Calu3 (cell line): ENCODE measurements at regions of chr2 and their contacts with region 1.

Region 1: DNA sequence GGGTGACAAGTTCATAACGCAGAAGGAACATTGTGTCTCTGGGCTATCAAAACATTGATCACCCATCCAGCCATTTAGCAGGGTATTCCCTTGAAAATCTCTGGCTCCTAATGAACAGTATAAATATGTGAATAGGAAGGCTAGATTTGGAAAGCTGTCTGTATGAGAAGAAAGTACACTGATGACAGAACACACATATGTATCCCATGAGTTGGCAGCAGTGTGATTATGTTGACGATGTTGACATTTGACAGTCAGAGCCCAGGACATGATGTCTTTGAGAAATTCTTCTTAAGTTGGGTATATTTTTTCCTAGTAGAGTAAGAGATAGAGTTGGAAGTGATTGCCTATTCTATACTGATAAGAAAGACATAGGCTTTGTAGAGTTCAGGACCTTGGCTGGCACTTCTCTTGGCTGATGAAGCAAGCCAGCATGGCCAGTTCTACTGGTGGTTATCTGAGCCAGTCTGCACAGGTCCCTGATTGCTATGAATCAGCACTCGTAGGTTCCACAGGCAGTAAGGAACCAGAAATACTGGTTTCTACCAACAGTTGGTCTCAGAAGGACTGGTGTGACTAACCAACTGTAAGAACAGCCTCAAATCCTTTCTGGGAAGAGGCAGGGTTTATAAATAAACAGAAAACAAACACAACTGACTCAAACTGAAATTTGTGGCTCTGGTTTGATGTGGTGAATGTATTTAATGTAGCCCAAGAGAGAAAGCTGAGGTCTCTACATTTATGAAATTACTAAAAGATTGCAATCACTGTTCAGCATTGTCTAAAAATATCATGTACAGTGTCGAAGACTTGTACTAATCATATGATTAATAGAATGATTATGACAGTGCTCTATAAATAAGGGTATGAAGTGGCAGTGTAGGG is 43.9 kb upstream of the RAPH1 start:
- DNase-seq: peak; percentile 79
- H3K4me3 Mint-ChIP-seq: peak overlapping the region; percentile 57
- H3K27ac Mint-ChIP-seq: peak overlapping the region; percentile 97
- H3K4me1 Mint-ChIP-seq: peaks cover 55% of the 10 kb centered on the region
- H3K27me3 Mint-ChIP-seq: no peaks in the 10 kb centered on the region
- CTCF ChIP-seq: no peak

Region 2: GRCh38 chr2:202911512-202912341 is 667.3 kb before region 1 on chr2 and contains the starts of genes CARF and WDR12:
- CTCF ChIA-PET with region 1: no interaction called
- intact Hi-C with region 1: no loop called
- DNase-seq: peak; percentile 92
- H3K4me3 Mint-ChIP-seq: peak within 1 kb of the TSS; percentile 99
- H3K27ac Mint-ChIP-seq: peak within 1 kb of the TSS; percentile 94
- H3K4me1 Mint-ChIP-seq: peaks cover 20% of the 10 kb centered on the region
- H3K27me3 Mint-ChIP-seq: no peaks in the 10 kb centered on the region
- CTCF ChIP-seq: no peak
- total RNA-seq, gene CARF: 4.6 and 5.8 TPM in 2 replicates
- total RNA-seq, gene WDR12: 101 and 105 TPM in 2 replicates

Region 3: DNA sequence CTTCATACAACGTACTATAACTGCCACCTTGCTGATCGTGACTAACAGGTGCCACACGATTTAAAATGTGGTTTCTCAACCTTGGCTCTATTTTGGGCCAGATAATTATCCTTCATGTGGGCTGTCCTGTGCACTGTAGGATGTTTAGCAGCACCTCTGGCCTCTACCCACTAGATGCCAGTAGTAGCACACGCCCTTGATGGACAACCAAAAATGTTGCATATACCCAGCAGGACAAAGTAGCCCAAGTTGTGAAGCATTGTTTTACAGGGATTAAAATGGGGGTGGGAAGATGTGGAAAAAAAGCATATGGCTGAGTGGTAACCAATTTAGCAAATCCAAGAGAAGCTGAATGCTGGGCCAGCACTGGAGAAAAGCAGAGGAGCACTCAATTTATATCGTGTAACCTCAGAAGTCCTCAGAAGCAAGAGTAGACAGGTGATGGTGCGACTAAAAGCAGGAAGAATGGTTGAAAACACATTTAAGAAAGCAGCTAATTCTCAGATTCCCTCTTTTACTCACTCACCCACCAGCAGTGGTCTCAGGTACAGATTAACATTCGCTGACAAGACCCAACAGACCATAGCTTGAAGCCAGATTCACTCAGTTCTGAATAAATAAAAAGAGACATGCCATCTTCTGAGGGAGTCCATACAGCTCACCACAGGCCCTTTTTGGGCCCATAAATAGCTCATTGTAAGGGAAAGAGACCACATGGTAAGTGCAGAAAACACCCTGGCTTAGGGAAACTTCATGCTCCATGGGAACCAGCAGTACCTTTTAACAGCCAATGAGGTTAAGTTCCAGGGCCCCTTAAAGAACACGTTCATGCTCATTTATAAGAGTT is 94.5 kb before region 1 on chr2:
- CTCF ChIA-PET with region 1: no interaction called
- intact Hi-C with region 1: loop called (anchors 5 kb)
- DNase-seq: peak; percentile 35
- H3K4me3 Mint-ChIP-seq: no peak overlapping the region
- H3K27ac Mint-ChIP-seq: peak overlapping the region; percentile 46
- H3K4me1 Mint-ChIP-seq: peaks cover 19% of the 10 kb centered on the region
- H3K27me3 Mint-ChIP-seq: no peaks in the 10 kb centered on the region
- CTCF ChIP-seq: peak; percentile 41